ENCODE measurements at regions of chr6 and their contacts with region 1.

Region 1: DNA sequence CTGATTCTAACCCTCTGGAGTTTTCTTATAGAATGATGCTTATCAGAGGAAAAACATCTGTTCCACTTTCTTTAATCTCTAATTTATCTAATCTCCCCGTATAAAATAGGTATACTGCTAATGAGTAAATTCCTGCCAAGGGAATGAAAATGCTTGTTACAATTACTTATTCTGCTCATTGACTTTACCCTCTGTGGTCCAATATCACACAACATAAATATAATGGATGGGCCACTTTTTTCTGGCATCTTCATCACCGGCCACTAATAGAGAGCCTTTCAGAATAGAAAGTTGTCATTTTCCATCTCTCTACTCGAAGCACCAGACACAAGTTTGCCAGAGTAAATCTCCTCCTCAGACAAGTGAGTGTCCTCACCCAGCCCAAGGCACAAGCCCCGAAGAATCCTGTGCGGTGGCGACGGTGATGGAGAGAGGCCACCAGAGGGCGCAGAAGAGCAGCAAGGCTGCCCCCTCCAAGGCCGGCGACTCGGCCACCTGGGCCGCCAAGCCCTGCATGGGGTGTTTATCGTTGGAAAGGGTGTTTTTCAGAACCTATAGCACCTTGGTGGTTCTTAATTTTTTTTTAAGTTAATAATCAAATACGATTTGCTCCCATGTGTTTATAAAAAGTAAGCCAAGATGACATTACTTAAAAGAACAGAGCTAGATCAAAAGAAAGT is 212.9 kb upstream of the ARID1B start:
- DNase-seq: peak; percentile 56 to 86
- ATAC-seq: peak; percentile 96

Region 2: DNA sequence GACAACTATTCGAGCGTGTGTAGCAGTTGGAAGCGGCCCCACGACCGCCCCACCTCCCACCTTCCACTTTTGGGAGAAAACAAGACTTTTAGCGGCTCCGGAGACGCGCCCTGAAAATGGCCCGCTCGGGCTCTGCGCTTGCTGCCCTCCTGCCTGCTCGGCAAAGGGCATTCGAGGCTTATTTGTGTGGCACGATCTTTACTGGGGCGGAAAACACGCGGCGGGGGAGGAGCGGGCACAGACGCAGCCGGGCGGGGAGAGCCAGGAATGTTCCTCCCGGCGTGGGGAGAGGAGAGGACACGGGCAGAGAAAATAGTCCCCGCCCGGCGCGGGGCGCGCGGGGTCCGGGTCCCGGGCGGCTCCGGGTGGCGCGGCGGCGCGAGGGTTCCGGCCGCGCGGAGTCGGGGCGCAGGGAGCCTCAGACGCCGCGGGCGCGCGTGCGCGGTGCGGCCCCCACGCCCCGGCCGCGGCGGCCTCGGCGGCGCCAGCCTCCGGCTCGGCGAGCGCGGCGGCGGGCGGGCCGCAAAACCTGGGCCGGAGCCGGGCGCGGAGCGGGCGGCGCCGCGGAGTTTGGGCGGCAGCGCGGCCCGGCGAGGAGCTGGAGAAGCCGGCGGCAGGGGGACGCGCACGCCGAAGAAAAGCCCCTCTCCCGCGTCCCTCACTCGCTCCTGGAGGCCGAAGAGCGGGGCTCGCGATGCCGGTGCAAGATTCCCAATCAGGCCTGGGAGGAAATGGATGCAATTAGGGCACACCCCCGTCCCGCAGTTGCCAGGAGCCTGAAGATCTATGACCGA is 122.9 kb after region 1 on chr6:
- intact Hi-C with region 1: loop called in 1 of 2 experiments (anchors 10 kb)
- DNase-seq: peak; percentile 89
- ATAC-seq: peak; percentile 88

Region 3: DNA sequence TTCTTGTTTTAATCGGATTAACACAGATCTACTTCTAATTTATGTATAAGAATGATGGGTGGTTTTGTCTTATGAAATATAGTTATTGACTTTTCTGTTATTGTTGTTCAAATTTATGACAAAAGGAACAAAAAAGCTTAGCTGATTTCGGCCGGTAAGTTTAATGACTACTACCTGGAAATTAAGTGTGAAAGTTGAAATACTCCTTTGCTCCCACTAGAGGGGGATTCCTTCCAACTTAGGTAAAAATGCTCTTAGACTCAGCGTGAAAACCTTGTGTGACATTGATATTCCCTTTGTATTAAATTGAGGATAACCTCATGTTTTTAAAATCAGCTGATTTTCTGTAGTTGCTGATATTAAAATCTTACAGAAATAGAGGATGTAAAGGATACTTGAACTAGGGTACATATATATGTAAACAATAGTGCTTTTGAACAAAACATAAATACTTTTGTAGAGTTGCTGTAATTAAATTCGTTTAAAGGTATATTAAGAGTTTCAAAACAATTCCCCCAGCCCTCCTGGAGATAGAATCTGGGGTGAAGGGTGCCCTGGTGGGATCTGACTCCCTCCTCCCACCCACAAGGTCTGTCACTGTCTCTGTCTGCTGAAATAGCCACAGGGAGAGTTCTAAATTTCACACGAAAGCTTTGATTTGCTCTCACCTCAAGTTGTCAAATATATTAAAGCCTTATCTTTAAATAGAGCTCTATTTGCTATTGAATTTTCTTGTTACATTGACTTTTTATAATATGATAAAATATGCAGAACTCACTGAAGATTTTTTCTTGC is 470.4 kb after region 1 on chr6:
- intact Hi-C with region 1: loop called in 1 of 2 experiments (anchors 10 kb)
- DNase-seq: no peak
- ATAC-seq: peak; percentile 73

Region 4: GRCh38 chr6:157184202-157185020 is 620.1 kb after region 1 on chr6:
- intact Hi-C with region 1: loop called in 1 of 2 experiments (anchors 10 kb)
- DNase-seq: peak; percentile 66 to 86
- ATAC-seq: peak; percentile 76